K562 (cell line): ENCODE measurements at regions of chr5 and their contacts with region 1.

Region 1: DNA sequence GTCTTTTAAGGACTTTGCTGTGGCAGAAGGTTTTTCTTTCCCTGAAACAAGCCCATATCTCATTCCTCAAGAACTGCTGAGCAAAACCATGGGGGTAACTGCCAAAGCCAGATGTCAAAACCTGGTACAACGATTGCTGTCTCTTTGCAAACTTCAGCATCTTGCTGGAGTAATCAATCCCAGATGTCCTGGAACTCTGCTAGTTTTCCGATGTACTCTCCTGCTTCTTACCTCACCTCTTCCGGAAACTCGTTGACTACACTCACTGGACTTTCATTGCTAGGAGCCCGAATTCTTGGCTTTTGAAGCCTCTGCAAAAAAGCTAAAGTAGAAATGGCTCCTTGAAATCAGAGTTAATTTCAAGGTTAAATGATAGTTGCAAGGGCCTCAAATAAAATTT is 23.3 kb downstream of the RAD1 start:
- DNase-seq: no peak
- ATAC-seq: no peak
- H3K4me3 ChIP-seq: no peak overlapping the region
- H3K27ac ChIP-seq: no peak overlapping the region
- H3K4me1 ChIP-seq: peaks cover 6 to 14% of the 10 kb centered on the region in 2 experiments
- H3K27me3 ChIP-seq: no peaks in the 10 kb centered on the region
- CTCF ChIP-seq: no peak
- EP300 ChIP-seq: no peak
- POLR2A ChIP-seq: no peak
- RAD21 ChIP-seq: no peak

Region 2: DNA sequence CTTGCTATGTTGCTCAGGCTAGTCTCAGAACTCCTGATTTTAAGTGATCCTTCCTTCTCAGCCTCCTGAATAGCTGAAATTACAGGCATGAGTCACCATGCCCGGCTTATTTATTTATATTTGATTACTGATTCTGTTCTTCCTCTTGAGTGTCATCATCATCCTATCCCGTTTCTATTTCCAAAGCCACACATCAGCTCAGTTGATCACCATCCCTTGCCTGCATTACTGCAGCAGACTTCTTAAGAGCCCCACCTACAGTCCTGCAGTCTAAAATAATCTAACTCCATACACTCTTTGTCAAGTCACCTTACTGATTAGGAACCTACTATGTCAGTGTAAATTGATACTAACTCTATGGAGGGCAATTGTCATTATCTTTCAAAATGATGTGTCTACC is 374.7 kb before region 1 on chr5:
- CTCF ChIA-PET with region 1: interaction called, 38 read pairs
- POLR2A ChIA-PET with region 1: no interaction called
- in situ Hi-C with region 1: loop called (anchors 5 kb)
- intact Hi-C with region 1: no loop called
- DNase-seq: no peak
- ATAC-seq: 0 out of 3 replicates have a peak, but pooled peaks have one; percentile 47
- H3K4me3 ChIP-seq: no peak overlapping the region
- H3K27ac ChIP-seq: no peak overlapping the region
- H3K4me1 ChIP-seq: peaks cover 0 to 3% of the 10 kb centered on the region in 2 experiments; a peak in 1 of 5 replicates
- H3K27me3 ChIP-seq: no peaks in the 10 kb centered on the region; a peak in 3 of 5 replicates
- CTCF ChIP-seq: no peak
- EP300 ChIP-seq: no peak
- POLR2A ChIP-seq: no peak
- RAD21 ChIP-seq: no peak